Naive thymus-derived CD4-positive, alpha-beta T cell (primary cell): ENCODE measurements at regions of chr1 and their contacts with region 1.

Region 1: GRCh38 chr1:10694633-10695627 is 101.5 kb downstream of the CASZ1 start:
- DNase-seq: peak; percentile 60 to 82 (median 71)
- ATAC-seq: peak; percentile 81
- H3K4me3 ChIP-seq: peak overlapping the region; percentile 41
- H3K4me3 Mint-ChIP-seq: peak overlapping the region; percentile 74 to 87 (median 84)
- H3K27ac ChIP-seq: peak overlapping the region; percentile 58
- H3K27ac Mint-ChIP-seq: peak overlapping the region in 6 of 9 donors; percentile 71 to 92 (median 81)
- H3K4me1 ChIP-seq: peaks cover 10 to 15% of the 10 kb centered on the region in 2 donors
- H3K4me1 Mint-ChIP-seq: peaks cover 14 to 20% (median 16%) of the 10 kb centered on the region in 7 donors
- H3K27me3 ChIP-seq: no peaks in the 10 kb centered on the region
- H3K27me3 Mint-ChIP-seq: peaks cover 0 to 21% (median 0%) of the 10 kb centered on the region in 5 donors

Region 2: GRCh38 chr1:9234223-9235095 is 1460.5 kb before region 1 on chr1 and contains the start of gene H6PD:
- CTCF ChIA-PET with region 1: no interaction called
- POLR2A ChIA-PET with region 1: no interaction called
- intact Hi-C with region 1: loop called in 1 of 2 experiments (anchors 10 kb)
- DNase-seq: peak; percentile 60 to 88 (median 74)
- ATAC-seq: peak; percentile 88
- H3K4me3 ChIP-seq: peak within 1 kb of the TSS; percentile 74
- H3K4me3 Mint-ChIP-seq: peak within 1 kb of the TSS; percentile 83 to 97 (median 96)
- H3K27ac ChIP-seq: peak within 1 kb of the TSS; percentile 86
- H3K27ac Mint-ChIP-seq: peak within 1 kb of the TSS; percentile 91 to 99 (median 98)
- H3K4me1 ChIP-seq: peaks cover 14 to 23% of the 10 kb centered on the region in 2 donors
- H3K4me1 Mint-ChIP-seq: peaks cover 19 to 44% (median 36%) of the 10 kb centered on the region in 7 donors
- H3K27me3 ChIP-seq: no peaks in the 10 kb centered on the region
- H3K27me3 Mint-ChIP-seq: no peaks in the 10 kb centered on the region
- total RNA-seq, gene H6PD: 18.6 to 27.6 (median 19.8) TPM

Region 3: DNA sequence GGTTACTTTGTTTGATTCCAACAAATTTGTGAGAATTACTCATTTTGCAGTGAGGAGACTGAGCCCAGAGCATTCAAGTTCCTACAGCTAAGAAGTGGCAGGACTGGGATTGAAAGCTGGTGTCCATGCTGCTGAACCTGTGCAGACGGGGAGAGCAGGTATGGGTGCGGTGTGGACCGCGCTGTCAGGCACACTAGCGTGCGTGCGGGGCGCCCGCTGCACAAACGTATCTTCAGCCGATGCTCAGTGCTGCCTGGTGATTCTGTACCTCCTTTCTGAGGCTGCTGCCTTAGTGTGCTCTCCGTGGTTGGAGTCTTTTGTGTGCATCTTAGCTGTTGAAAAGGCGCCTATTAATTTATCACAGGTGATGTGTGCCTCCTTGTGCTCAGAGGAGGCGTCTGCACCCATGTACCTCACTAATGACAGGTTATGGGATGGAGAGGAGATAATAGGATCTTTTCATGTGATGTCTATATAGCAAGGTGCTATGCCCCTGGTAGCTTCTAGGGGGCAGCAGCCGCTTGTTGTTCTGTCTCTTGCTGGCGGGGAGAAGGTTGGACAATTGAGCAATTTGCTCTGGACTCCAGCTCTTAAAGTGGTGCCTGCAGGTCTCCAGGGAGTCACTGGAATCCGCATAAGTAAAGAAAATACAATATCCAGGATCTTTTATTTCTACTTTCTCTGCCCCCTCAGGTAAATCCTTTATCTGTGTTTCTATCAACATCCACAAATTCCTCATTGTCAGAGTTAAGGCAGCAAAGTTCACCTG is 187.6 kb before region 1 on chr1:
- CTCF ChIA-PET with region 1: interaction called, 3 read pairs
- POLR2A ChIA-PET with region 1: no interaction called
- intact Hi-C with region 1: loop called (anchors 1 to 2 kb)
- DNase-seq: peak in 7 of 9 donors; percentile 32 to 60 (median 55)
- ATAC-seq: peak; percentile 78
- H3K4me3 ChIP-seq: no peak overlapping the region
- H3K4me3 Mint-ChIP-seq: peak overlapping the region in 4 of 10 donors; percentile 7 to 66 (median 36)
- H3K27ac ChIP-seq: no peak overlapping the region
- H3K27ac Mint-ChIP-seq: peak overlapping the region; percentile 37 to 85 (median 57)
- H3K4me1 ChIP-seq: peaks cover 29 to 32% of the 10 kb centered on the region in 2 donors
- H3K4me1 Mint-ChIP-seq: peaks cover 38 to 76% (median 54%) of the 10 kb centered on the region in 7 donors
- H3K27me3 ChIP-seq: no peaks in the 10 kb centered on the region
- H3K27me3 Mint-ChIP-seq: no peaks in the 10 kb centered on the region

Region 4: GRCh38 chr1:10856863-10857598 is 162.1 kb after region 1 on chr1:
- CTCF ChIA-PET with region 1: no interaction called
- POLR2A ChIA-PET with region 1: no interaction called
- intact Hi-C with region 1: no loop called
- DNase-seq: no peak
- ATAC-seq: no peak
- H3K4me3 ChIP-seq: no peak overlapping the region
- H3K4me3 Mint-ChIP-seq: no peak overlapping the region
- H3K27ac ChIP-seq: no peak overlapping the region
- H3K27ac Mint-ChIP-seq: peak overlapping the region in 1 of 9 donors; percentile 24
- H3K4me1 ChIP-seq: no peaks in the 10 kb centered on the region
- H3K4me1 Mint-ChIP-seq: peaks cover 0 to 3% (median 0%) of the 10 kb centered on the region in 7 donors
- H3K27me3 ChIP-seq: no peaks in the 10 kb centered on the region
- H3K27me3 Mint-ChIP-seq: peaks cover 0 to 12% (median 0%) of the 10 kb centered on the region in 5 donors

Region 5: GRCh38 chr1:10867138-10867721 is 172.3 kb after region 1 on chr1:
- CTCF ChIA-PET with region 1: no interaction called
- POLR2A ChIA-PET with region 1: no interaction called
- intact Hi-C with region 1: loop called (anchors 1 to 2 kb)
- DNase-seq: peak; percentile 36 to 79 (median 61)
- ATAC-seq: peak; percentile 93
- H3K4me3 ChIP-seq: peak overlapping the region; percentile 33
- H3K4me3 Mint-ChIP-seq: peak overlapping the region in 8 of 10 donors; percentile 43 to 81 (median 60)
- H3K27ac ChIP-seq: no peak overlapping the region
- H3K27ac Mint-ChIP-seq: peak overlapping the region in 1 of 9 donors; percentile 32
- H3K4me1 ChIP-seq: peaks cover 0 to 7% of the 10 kb centered on the region in 2 donors
- H3K4me1 Mint-ChIP-seq: peaks cover 8 to 32% (median 15%) of the 10 kb centered on the region in 7 donors
- H3K27me3 ChIP-seq: peaks cover 0 to 15% of the 10 kb centered on the region in 2 donors
- H3K27me3 Mint-ChIP-seq: peaks cover 51 to 74% (median 56%) of the 10 kb centered on the region in 5 donors

Region 6: GRCh38 chr1:11012250-11013171 is 317.6 kb after region 1 on chr1 and contains the start of gene TARDBP:
- CTCF ChIA-PET with region 1: interaction called, 4 read pairs
- POLR2A ChIA-PET with region 1: no interaction called
- intact Hi-C with region 1: loop called in 1 of 2 experiments (anchors 5 kb)
- DNase-seq: peak; percentile 88 to 95 (median 93)
- ATAC-seq: peak; percentile 95
- H3K4me3 ChIP-seq: peak within 1 kb of the TSS; percentile 74
- H3K4me3 Mint-ChIP-seq: peak within 1 kb of the TSS; percentile 86 to 96 (median 93)
- H3K27ac ChIP-seq: peak within 1 kb of the TSS; percentile 94
- H3K27ac Mint-ChIP-seq: peak within 1 kb of the TSS; percentile 95 to 98 (median 98)
- H3K4me1 ChIP-seq: peaks cover 19 to 24% of the 10 kb centered on the region in 2 donors
- H3K4me1 Mint-ChIP-seq: peaks cover 15 to 36% (median 26%) of the 10 kb centered on the region in 7 donors
- H3K27me3 ChIP-seq: no peaks in the 10 kb centered on the region
- H3K27me3 Mint-ChIP-seq: no peaks in the 10 kb centered on the region
- total RNA-seq, gene TARDBP: 114 to 196 (median 174) TPM